ENCODE measurements at regions of chr12 and their contacts with region 1.

Region 1: DNA sequence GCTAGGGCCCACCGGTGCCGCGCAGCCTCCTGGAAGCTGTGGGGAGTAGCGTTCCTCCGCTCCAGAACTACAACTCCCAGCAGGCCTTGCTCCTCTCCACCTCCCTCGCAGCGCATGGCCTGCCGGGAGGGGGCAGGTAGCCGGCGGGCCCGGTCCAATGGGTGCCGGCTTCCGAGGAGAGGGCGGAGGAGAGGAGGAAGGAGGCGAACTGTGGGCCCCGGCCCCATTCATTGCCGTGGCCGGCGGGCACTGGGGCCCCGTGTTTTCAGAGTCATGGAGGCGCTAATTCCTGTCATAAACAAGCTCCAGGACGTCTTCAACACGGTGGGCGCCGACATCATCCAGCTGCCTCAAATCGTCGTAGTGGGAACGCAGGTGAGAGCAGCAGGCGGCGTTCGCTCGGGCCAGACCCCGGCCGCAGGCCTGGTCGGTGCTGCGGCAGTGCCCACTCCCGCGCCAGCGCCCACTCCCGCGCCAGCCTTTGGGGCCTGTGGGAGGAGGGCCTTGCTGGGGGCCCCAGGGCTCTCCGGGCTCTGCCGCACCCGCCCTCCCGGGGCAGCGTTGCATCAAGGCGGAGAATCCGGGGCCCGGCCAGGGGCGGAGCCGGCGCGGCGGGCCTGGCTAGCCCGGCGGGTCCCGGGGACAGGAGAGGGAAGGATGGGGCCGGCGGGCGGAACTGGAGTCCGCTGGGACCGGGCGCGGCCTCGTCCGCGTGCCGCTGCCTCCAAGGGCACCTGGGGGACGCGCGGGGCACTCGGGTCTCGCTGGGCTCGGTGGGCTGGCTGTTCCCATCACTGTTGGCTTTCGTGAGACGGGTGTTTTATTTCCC is at the start of gene DNM1L:
- DNase-seq: peak; percentile 85 to 96 (median 93)
- ATAC-seq: peak; percentile 98
- H3K4me3 ChIP-seq: peak within 1 kb of the TSS; percentile 62 to 76
- H3K4me3 Mint-ChIP-seq: peak within 1 kb of the TSS; percentile 94
- H3K27ac ChIP-seq: peak within 1 kb of the TSS; percentile 71 to 87
- H3K27ac Mint-ChIP-seq: peak within 1 kb of the TSS; percentile 90
- H3K4me1 ChIP-seq: peaks cover 11% of the 10 kb centered on the region
- H3K4me1 Mint-ChIP-seq: peaks cover 30% of the 10 kb centered on the region
- H3K27me3 ChIP-seq: no peaks in the 10 kb centered on the region
- H3K27me3 Mint-ChIP-seq: no peaks in the 10 kb centered on the region
- CTCF ChIP-seq: no peak
- total RNA-seq, gene DNM1L: 76.1 to 77.1 TPM

Region 2: DNA sequence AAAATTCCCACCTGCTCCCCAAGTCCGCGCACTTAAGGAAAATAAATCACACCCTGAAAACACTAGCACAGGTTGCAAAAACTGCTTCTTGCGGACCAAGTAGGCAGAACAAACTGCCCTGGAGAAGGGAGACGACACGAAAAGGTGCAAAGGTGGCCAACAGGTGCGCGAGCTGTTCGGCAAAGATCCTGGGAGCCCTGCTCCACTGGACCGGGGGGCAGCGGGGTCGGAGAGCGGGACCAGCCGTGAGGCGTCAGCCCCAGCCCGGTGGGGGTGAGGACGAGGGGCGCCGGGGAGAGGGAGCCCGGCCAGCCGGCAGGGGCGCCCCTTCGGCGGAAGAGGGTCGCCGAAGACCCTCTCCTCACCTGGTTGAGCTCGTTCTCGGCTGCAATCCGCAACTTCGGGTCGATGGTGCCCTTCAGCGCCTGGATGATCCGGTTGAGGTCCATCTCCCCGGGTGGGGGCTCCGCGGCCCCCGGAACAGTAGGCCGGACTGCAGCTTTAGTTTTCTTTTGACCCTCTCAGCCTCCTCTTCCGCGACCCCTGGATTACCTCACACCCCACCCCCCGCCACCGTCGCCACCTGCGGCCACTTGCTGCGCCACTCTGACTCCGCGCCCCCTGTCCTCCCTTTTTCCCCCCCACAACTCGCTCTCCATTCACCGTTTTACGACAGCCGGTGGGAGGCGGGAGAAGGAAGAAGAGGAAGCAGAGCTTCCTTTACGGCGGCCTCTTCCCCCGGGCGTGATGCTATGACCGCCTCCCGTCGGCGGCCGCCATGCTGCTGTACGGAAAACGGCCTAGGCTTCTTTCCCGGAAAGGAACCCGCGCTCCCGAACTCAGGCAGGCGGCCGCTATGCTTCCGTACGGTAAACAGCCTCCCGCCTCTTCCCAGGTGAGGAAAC is 1983.9 kb before region 1 on chr12 and contains the start of gene IPO8:
- CTCF ChIA-PET with region 1: no interaction called
- POLR2A ChIA-PET with region 1: no interaction called
- intact Hi-C with region 1: loop called in 1 of 2 experiments (anchors 5 kb)
- DNase-seq: peak; percentile 65 to 93 (median 85)
- ATAC-seq: peak; percentile 93
- H3K4me3 ChIP-seq: peak within 1 kb of the TSS; percentile 63 to 96
- H3K4me3 Mint-ChIP-seq: peak within 1 kb of the TSS; percentile 98
- H3K27ac ChIP-seq: peak within 1 kb of the TSS; percentile 50 to 59
- H3K27ac Mint-ChIP-seq: peak within 1 kb of the TSS; percentile 93
- H3K4me1 ChIP-seq: peaks cover 35% of the 10 kb centered on the region
- H3K4me1 Mint-ChIP-seq: peaks cover 51% of the 10 kb centered on the region
- H3K27me3 ChIP-seq: no peaks in the 10 kb centered on the region
- H3K27me3 Mint-ChIP-seq: no peaks in the 10 kb centered on the region
- CTCF ChIP-seq: no peak
- total RNA-seq, gene IPO8: 21.0 to 22.7 TPM

Region 3: DNA sequence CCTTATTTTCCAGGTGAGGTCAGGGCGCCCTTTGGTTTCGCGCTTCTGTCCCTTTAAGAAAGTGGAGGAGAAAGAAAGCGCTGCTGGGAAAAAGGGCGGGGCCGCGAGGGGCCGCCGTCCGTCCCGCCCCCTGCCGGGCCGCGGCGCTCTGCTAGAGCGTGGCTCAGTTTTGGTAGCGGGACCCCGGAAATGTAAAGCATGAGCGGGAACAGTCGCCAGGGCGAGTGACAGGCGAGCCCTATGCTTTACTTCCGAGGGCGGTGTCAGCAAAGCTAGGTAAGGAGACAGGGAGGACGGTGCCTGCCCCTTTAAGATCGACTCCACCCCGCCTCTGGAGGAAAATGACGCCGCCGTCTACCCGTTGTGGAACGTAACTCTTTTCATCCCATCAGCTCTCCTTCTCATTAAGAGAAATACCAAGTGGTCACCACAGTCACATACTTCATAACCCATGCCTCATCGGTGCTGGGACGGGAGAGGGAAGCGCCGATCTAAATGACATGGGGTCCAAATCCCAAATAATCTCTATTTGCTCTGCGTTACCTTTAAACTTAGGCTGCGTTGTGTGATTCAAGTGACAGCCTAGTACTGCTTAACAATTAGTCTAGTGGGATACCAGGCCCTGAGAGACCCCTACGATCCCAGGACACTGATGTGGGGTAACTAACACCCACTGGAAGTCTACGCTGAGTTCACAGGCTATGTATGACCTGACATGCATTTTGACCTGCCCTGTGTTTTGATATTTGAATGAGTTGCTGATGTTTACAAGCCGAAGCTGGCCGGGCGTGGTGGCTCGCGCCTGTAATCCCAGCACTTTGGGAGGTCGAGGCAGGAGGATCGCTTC is 1020.0 kb before region 1 on chr12 and contains the start of gene ETFBKMT:
- CTCF ChIA-PET with region 1: interaction called, 3 read pairs
- POLR2A ChIA-PET with region 1: no interaction called
- intact Hi-C with region 1: loop called (anchors 1 to 2 kb)
- DNase-seq: peak; percentile 84 to 97 (median 92)
- ATAC-seq: peak; percentile 99
- H3K4me3 ChIP-seq: peak within 1 kb of the TSS; percentile 82 to 87
- H3K4me3 Mint-ChIP-seq: peak within 1 kb of the TSS; percentile 98
- H3K27ac ChIP-seq: peak within 1 kb of the TSS; percentile 89 to 92
- H3K27ac Mint-ChIP-seq: peak within 1 kb of the TSS; percentile 100
- H3K4me1 ChIP-seq: peaks cover 11% of the 10 kb centered on the region
- H3K4me1 Mint-ChIP-seq: peaks cover 14% of the 10 kb centered on the region
- H3K27me3 ChIP-seq: no peaks in the 10 kb centered on the region
- H3K27me3 Mint-ChIP-seq: no peaks in the 10 kb centered on the region
- CTCF ChIP-seq: peak; percentile 22
- total RNA-seq, gene ETFBKMT: 0.41 to 1.0 TPM

Region 4: GRCh38 chr12:32106517-32107358 is 572.6 kb before region 1 on chr12 and contains the start of gene BICD1:
- CTCF ChIA-PET with region 1: no interaction called
- POLR2A ChIA-PET with region 1: no interaction called
- intact Hi-C with region 1: loop called in 1 of 2 experiments (anchors 5 kb)
- DNase-seq: peak; percentile 32 to 85 (median 74)
- ATAC-seq: peak; percentile 85
- H3K4me3 ChIP-seq: peak within 1 kb of the TSS; percentile 55 to 84
- H3K4me3 Mint-ChIP-seq: peak within 1 kb of the TSS; percentile 88
- H3K27ac ChIP-seq: peak within 1 kb of the TSS; percentile 16 to 61
- H3K27ac Mint-ChIP-seq: peak within 1 kb of the TSS; percentile 88
- H3K4me1 ChIP-seq: peaks cover 17% of the 10 kb centered on the region
- H3K4me1 Mint-ChIP-seq: peaks cover 30% of the 10 kb centered on the region
- H3K27me3 ChIP-seq: no peaks in the 10 kb centered on the region
- H3K27me3 Mint-ChIP-seq: no peaks in the 10 kb centered on the region
- CTCF ChIP-seq: peak; percentile 17
- total RNA-seq, gene BICD1: 7.0 to 7.2 TPM

Region 5: DNA sequence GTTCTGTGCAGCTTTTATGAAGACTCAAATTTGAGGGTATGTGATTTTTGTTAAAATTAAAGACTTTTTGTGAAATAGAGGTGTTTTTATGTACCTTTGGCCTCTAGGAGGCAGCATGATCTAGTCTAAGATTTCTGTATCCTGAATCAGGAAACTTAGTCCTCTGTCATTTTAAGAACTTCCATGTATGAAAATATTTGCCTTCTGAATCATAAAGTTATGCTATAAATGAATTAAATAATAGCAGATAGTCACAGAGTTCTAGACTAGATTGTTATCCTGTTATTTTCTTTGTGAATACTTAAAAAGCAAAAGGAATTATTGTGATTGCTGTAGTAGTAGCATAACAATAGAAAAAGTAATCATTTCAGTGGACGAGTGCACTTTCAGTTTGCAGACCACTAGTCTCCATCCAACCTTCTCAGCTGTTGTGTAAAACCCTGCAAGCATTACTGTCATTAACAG is 223.7 kb before region 1 on chr12:
- CTCF ChIA-PET with region 1: no interaction called
- POLR2A ChIA-PET with region 1: no interaction called
- intact Hi-C with region 1: loop called in 1 of 2 experiments (anchors 10 kb)
- DNase-seq: peak in 3 of 9 experiments; percentile 14 to 69 (median 50)
- ATAC-seq: no peak
- H3K4me3 ChIP-seq: no peak overlapping the region
- H3K4me3 Mint-ChIP-seq: peak overlapping the region; percentile 24
- H3K27ac ChIP-seq: no peak overlapping the region
- H3K27ac Mint-ChIP-seq: no peak overlapping the region
- H3K4me1 ChIP-seq: no peaks in the 10 kb centered on the region
- H3K4me1 Mint-ChIP-seq: peaks cover 2% of the 10 kb centered on the region
- H3K27me3 ChIP-seq: no peaks in the 10 kb centered on the region
- H3K27me3 Mint-ChIP-seq: no peaks in the 10 kb centered on the region
- CTCF ChIP-seq: peak; percentile 66

Region 6: GRCh38 chr12:32718926-32719325 is 39.6 kb after region 1 on chr12:
- CTCF ChIA-PET with region 1: no interaction called
- POLR2A ChIA-PET with region 1: no interaction called
- intact Hi-C with region 1: loop called in 1 of 2 experiments (anchors 5 kb)
- DNase-seq: no peak
- ATAC-seq: no peak
- H3K4me3 ChIP-seq: no peak overlapping the region
- H3K4me3 Mint-ChIP-seq: no peak overlapping the region
- H3K27ac ChIP-seq: no peak overlapping the region
- H3K27ac Mint-ChIP-seq: no peak overlapping the region
- H3K4me1 ChIP-seq: no peaks in the 10 kb centered on the region
- H3K4me1 Mint-ChIP-seq: no peaks in the 10 kb centered on the region
- H3K27me3 ChIP-seq: no peaks in the 10 kb centered on the region
- H3K27me3 Mint-ChIP-seq: no peaks in the 10 kb centered on the region
- CTCF ChIP-seq: no peak

Region 7: DNA sequence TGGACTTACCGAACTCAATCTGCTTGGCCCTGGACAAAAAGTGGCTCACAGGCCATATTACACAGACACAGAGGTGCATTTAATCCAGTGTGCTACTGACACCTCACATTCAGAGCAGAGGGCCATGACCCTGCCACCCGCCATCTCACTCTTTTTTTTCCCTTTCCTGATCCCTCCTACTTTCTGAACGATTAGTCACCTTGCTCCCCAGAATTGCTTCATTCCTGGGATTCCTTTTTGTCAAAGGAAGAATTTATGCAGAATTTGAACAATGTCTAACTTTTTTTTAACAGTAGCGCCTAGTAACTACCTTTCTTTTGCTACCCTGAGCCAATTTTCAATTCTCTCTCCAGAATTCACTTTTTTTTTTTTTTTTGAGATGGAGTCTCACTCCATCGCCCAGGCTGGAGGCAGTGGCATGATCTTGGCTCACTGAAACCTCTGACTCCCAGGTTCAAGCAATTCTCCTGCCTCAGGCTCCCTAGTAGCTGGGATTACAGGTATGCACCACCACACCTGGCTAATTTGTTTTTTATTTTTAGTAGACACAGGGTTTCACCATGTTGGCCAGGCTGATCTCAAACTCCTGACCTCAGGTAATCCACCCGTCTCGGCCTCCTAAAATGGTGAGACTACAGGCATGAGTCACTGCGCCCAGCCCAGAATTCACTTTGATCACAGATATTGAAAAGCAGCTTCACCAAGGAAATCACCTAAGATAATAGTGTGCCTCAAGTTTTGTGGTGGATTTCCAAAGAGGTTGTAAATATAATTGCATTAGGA is 212.8 kb after region 1 on chr12:
- CTCF ChIA-PET with region 1: no interaction called
- POLR2A ChIA-PET with region 1: no interaction called
- intact Hi-C with region 1: no loop called
- DNase-seq: no peak
- ATAC-seq: no peak
- H3K4me3 ChIP-seq: no peak overlapping the region
- H3K4me3 Mint-ChIP-seq: no peak overlapping the region
- H3K27ac ChIP-seq: no peak overlapping the region
- H3K27ac Mint-ChIP-seq: no peak overlapping the region
- H3K4me1 ChIP-seq: peaks cover 2% of the 10 kb centered on the region
- H3K4me1 Mint-ChIP-seq: peaks cover 12% of the 10 kb centered on the region
- H3K27me3 ChIP-seq: peaks cover 3 to 4% of the 10 kb centered on the region in 2 experiments
- H3K27me3 Mint-ChIP-seq: peaks cover 44% of the 10 kb centered on the region
- CTCF ChIP-seq: no peak

Region 8: GRCh38 chr12:34022079-34022830 is 1343.0 kb after region 1 on chr12 and contains the start of gene ALG10:
- CTCF ChIA-PET with region 1: no interaction called
- POLR2A ChIA-PET with region 1: no interaction called
- intact Hi-C with region 1: loop called (anchors 1 kb)
- DNase-seq: peak; percentile 91 to 98 (median 96)
- ATAC-seq: peak; percentile 95
- H3K4me3 ChIP-seq: peak within 1 kb of the TSS; percentile 86 to 94
- H3K4me3 Mint-ChIP-seq: peak within 1 kb of the TSS; percentile 95
- H3K27ac ChIP-seq: peak within 1 kb of the TSS; percentile 88 to 97
- H3K27ac Mint-ChIP-seq: peak within 1 kb of the TSS; percentile 97
- H3K4me1 ChIP-seq: peaks cover 12% of the 10 kb centered on the region
- H3K4me1 Mint-ChIP-seq: peaks cover 16% of the 10 kb centered on the region
- H3K27me3 ChIP-seq: no peaks in the 10 kb centered on the region
- H3K27me3 Mint-ChIP-seq: no peaks in the 10 kb centered on the region
- CTCF ChIP-seq: peak; percentile 72
- total RNA-seq, gene ALG10: 8.6 to 9.0 TPM

Measured in CD8-positive, alpha-beta T cell (primary cell).